Natural killer cell (primary cell): ENCODE measurements at regions of chr16 and their contacts with region 1.

Region 1: DNA sequence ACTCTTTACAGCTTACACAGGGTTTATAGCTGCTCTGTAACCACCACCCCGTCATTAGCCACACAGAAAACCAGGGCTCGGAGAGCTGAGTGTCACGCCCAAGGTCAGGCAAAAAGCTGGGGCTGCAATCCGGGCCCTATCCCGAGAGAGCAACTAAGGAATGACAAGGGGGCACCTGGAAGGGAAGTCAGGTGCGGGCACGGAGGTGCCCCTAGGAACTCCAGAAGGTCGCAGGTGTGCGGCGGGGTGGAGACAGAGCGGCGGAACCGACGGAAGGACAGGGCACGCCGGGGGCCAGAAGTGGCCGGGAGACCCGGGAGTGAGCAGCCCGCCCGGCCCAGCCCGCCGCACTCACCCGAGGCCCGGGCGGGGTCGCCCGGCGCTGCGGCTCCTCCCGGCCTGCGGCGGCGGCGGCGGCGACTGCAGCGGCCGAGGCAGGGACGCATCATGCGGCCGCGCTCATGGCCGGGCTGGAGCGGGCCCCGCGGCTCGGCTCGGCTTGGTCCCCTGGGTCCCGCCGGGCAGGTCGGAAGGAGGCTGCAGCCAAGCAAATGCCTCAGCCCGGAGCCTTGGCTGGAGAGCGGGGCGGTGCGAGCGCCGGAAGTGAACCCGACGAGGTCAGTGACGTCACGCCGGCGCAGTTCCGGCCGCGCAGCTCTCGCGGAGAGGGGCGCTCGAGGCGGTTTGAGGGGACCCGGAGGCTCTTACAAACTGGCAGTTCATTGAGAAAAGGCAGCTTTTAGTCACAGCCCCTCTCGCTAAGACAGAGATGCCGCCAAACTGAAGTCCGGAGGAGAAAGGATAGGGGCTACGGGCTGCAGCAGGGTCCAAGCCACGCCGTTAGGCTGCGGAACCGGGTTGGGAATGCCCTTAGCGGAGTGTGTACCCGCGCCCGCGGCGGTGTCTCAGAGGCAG is at the start of gene ZDHHC7:
- DNase-seq: peak; percentile 86 to 95
- ATAC-seq: peak; percentile 86 to 93 (median 87)
- H3K4me3 ChIP-seq: peak within 1 kb of the TSS; percentile 78
- H3K4me3 Mint-ChIP-seq: peak within 1 kb of the TSS; percentile 99
- H3K27ac ChIP-seq: peak within 1 kb of the TSS; percentile 93
- H3K27ac Mint-ChIP-seq: peak within 1 kb of the TSS; percentile 100
- H3K4me1 ChIP-seq: peaks cover 19% of the 10 kb centered on the region
- H3K4me1 Mint-ChIP-seq: peaks cover 24 to 41% of the 10 kb centered on the region in 2 donors
- H3K27me3 ChIP-seq: no peaks in the 10 kb centered on the region
- H3K27me3 Mint-ChIP-seq: peaks cover 0 to 4% of the 10 kb centered on the region in 2 donors
- CTCF ChIP-seq: no peak
- total RNA-seq, gene ZDHHC7: 37.9 to 64.9 (median 45.2) TPM

Region 2: GRCh38 chr16:84952335-84953189 is 58.6 kb before region 1 on chr16:
- intact Hi-C with region 1: no loop called
- DNase-seq: peak; percentile 56 to 89
- ATAC-seq: peak; percentile 83 to 95 (median 91)
- H3K4me3 ChIP-seq: no peak overlapping the region
- H3K4me3 Mint-ChIP-seq: no peak overlapping the region
- H3K27ac ChIP-seq: no peak overlapping the region
- H3K27ac Mint-ChIP-seq: no peak overlapping the region
- H3K4me1 ChIP-seq: peaks cover 7% of the 10 kb centered on the region
- H3K4me1 Mint-ChIP-seq: peaks cover 0 to 3% of the 10 kb centered on the region in 2 donors
- H3K27me3 ChIP-seq: no peaks in the 10 kb centered on the region
- H3K27me3 Mint-ChIP-seq: peaks cover 0 to 7% of the 10 kb centered on the region in 2 donors
- CTCF ChIP-seq: peak; percentile 82

Region 3: GRCh38 chr16:85027349-85027957 is 16.3 kb after region 1 on chr16 and contains the start of gene KIAA0513:
- intact Hi-C with region 1: loop called (anchors 1 kb)
- DNase-seq: peak; percentile 98
- ATAC-seq: peak; percentile 77 to 93 (median 88)
- H3K4me3 ChIP-seq: peak within 1 kb of the TSS; percentile 88
- H3K4me3 Mint-ChIP-seq: peak within 1 kb of the TSS; percentile 90
- H3K27ac ChIP-seq: peak within 1 kb of the TSS; percentile 78
- H3K27ac Mint-ChIP-seq: peak within 1 kb of the TSS; percentile 79 to 97
- H3K4me1 ChIP-seq: peaks cover 29% of the 10 kb centered on the region
- H3K4me1 Mint-ChIP-seq: peaks cover 20 to 33% of the 10 kb centered on the region in 2 donors
- H3K27me3 ChIP-seq: no peaks in the 10 kb centered on the region
- H3K27me3 Mint-ChIP-seq: no peaks in the 10 kb centered on the region
- CTCF ChIP-seq: peak; percentile 9
- total RNA-seq, gene KIAA0513: 7.9 to 17.7 (median 12.1) TPM